Activated CD4-positive, alpha-beta T cell treated with anti-CD3 and anti-CD28 coated beads, Interleukin-2, amount 10 ng/mL, durations not matched to agents 24 days and 14 days (primary cell): ENCODE measurements at regions of chr16 and their contacts with region 1.

Region 1: DNA sequence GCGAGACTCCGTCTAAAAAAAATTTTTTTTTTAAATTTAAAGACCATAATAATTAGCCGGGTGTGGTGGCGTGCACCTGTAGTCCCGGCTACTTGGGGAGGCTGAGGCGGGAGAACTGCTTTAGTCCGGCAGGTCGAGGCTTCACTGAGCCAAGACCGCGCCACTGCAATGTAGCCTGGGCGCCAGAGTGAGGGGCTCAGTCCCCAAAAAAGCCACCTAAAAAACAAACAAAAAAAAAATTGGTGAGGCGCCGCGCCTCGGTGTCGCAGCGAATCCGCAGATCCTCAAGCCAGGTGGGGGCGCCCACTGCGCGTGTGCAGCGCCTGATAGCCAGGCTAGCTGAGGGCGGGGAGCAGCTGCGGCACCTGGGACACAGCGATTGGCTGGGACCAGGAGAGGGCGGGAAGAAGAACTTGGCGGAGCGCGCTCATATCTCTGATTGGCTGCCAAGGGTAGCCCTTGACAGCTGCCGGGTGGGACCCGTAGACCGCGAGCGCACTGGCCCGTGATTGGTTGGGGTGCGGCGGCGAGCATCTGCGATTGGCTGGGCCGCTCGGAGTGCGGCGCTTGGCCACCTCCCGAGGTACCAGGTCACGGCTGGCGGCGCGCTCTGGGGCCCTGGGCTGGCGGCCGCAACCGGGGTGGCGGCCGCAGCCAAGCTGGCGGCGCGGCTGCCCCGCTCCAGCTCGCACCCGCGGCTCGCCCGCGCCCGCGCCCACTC is 9.0 kb upstream of the CLDN9 start:
- DNase-seq: peak; percentile 99
- H3K4me3 Mint-ChIP-seq: peak overlapping the region; percentile 69
- H3K27ac Mint-ChIP-seq: peak overlapping the region; percentile 62
- H3K4me1 Mint-ChIP-seq: peaks cover 23% of the 10 kb centered on the region
- H3K27me3 Mint-ChIP-seq: peaks cover 16% of the 10 kb centered on the region

Region 2: GRCh38 chr16:2968738-2969544 is 34.8 kb before region 1 on chr16 and contains the start of gene PAQR4:
- intact Hi-C with region 1: no loop called
- DNase-seq: peak; percentile 97
- H3K4me3 Mint-ChIP-seq: peak within 1 kb of the TSS; percentile 84
- H3K27ac Mint-ChIP-seq: peak within 1 kb of the TSS; percentile 76
- H3K4me1 Mint-ChIP-seq: peaks cover 23% of the 10 kb centered on the region
- H3K27me3 Mint-ChIP-seq: peaks cover 18% of the 10 kb centered on the region
- total RNA-seq, gene PAQR4: 41.0 and 43.3 TPM in 2 replicates

Region 3: GRCh38 chr16:3023669-3024478 is 20.1 kb after region 1 on chr16 and contains the starts of genes HCFC1R1 and THOC6:
- intact Hi-C with region 1: loop called (anchors 1 kb)
- DNase-seq: peak; percentile 99
- H3K4me3 Mint-ChIP-seq: peak within 1 kb of the TSS; percentile 83
- H3K27ac Mint-ChIP-seq: peak within 1 kb of the TSS; percentile 95
- H3K4me1 Mint-ChIP-seq: peaks cover 45% of the 10 kb centered on the region
- H3K27me3 Mint-ChIP-seq: peaks cover 2% of the 10 kb centered on the region
- total RNA-seq, gene HCFC1R1: 29.4 TPM in 2 replicates
- total RNA-seq, gene THOC6: 55.3 and 57.0 TPM in 2 replicates

Region 4: GRCh38 chr16:3042376-3042775 is 38.6 kb after region 1 on chr16:
- intact Hi-C with region 1: loop called (anchors 5 kb)
- DNase-seq: no peak
- H3K4me3 Mint-ChIP-seq: no peak overlapping the region
- H3K27ac Mint-ChIP-seq: no peak overlapping the region
- H3K4me1 Mint-ChIP-seq: peaks cover 15% of the 10 kb centered on the region
- H3K27me3 Mint-ChIP-seq: peaks cover 42% of the 10 kb centered on the region